AG04449 (cell line): ENCODE measurements at regions of chr15 and their contacts with region 1.

Region 1: GRCh38 chr15:67863442-67863987 is 23.7 kb upstream of the RNU6-1 start:
- DNase-seq: no peak
- H3K4me3 ChIP-seq: peak overlapping the region; percentile 51
- CTCF ChIP-seq: peak; percentile 92

Region 2: DNA sequence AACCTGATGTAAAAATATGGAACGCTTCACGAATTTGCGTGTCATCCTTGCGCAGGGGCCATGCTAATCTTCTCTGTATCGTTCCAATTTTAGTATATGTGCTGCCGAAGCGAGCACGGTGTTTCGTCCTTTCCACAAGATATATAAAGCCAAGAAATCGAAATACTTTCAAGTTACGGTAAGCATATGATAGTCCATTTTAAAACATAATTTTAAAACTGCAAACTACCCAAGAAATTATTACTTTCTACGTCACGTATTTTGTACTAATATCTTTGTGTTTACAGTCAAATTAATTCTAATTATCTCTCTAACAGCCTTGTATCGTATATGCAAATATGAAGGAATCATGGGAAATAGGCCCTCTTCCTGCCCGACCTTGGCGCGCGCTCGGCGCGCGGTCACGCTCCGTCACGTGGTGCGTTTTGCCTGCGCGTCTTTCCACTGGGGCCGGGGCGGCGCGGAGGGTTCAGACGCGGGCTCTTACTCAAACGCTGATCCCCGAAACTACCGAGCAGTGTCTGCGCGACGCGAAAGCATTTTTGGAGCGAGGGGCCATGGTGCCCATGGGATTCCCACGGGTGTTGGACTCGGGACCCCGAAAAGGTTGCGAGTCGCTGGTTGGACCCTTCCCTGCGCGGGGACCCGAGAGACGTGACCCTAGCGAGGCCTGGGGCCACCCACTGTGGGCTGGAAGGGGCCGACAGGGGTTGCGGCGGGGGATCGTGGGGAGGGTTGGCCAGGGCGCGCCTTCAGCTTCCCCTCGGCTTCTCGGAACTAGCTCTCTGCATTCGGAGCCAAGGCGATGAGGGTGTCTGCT is 23.4 kb before region 1 on chr15 and contains the start of gene RNU6-1:
- CTCF ChIA-PET with region 1: interaction called, 15 read pairs
- POLR2A ChIA-PET with region 1: no interaction called
- DNase-seq: peak; percentile 52
- H3K4me3 ChIP-seq: peak within 1 kb of the TSS; percentile 96
- CTCF ChIP-seq: no peak

Region 3: DNA sequence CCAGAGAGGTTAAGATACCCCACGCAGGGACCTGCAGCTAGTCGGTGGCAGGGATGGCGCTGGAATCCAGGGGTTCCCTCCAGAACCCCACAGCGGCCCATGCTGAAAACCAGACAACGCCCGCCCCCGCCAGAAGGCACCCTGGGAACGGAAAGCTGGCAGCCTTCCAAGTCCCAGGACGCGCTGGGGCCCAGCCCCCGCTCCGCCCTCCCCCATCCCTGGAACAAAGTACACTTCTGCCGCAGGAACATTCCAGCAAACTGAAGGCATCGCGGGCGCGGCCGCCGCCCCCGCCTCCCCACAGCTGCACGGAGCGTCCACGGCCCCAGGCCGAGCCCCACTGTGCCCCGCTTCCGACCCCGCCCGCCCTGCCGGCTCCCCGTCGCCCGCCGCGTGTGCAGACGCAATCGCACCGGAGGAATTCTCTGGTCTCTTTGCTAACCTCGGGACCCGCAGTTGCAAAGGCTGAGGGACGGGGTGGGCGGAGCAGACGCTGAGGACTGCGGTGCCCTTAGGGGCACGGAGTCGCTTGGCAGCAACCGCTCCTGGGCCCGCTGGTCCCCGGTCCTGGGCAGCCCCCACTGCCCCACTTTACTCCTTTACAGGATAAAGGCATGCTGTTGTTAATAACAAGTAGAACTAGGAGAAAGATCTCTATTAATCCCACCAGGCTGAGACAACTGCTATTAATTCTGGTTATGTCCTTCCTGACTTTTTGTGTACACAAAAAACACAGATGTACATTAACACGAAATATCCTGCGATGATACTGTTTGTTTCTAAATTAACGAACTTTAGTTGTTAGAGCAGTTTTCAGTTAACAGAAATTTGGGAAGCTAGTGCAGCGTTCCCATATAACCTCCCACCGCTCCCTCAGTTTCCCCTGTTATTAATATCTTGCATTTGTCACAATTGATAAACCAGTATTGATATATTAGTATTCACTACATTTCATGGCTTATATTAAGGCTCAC is 21.3 kb after region 1 on chr15:
- CTCF ChIA-PET with region 1: interaction called, 13 read pairs
- POLR2A ChIA-PET with region 1: no interaction called
- DNase-seq: no peak
- H3K4me3 ChIP-seq: peak overlapping the region; percentile 57
- CTCF ChIP-seq: no peak

Region 4: GRCh38 chr15:68154923-68155559 is 291.5 kb after region 1 on chr15:
- CTCF ChIA-PET with region 1: interaction called, 212 read pairs
- POLR2A ChIA-PET with region 1: no interaction called
- DNase-seq: no peak
- H3K4me3 ChIP-seq: no peak overlapping the region
- CTCF ChIP-seq: peak; percentile 65

Region 5: DNA sequence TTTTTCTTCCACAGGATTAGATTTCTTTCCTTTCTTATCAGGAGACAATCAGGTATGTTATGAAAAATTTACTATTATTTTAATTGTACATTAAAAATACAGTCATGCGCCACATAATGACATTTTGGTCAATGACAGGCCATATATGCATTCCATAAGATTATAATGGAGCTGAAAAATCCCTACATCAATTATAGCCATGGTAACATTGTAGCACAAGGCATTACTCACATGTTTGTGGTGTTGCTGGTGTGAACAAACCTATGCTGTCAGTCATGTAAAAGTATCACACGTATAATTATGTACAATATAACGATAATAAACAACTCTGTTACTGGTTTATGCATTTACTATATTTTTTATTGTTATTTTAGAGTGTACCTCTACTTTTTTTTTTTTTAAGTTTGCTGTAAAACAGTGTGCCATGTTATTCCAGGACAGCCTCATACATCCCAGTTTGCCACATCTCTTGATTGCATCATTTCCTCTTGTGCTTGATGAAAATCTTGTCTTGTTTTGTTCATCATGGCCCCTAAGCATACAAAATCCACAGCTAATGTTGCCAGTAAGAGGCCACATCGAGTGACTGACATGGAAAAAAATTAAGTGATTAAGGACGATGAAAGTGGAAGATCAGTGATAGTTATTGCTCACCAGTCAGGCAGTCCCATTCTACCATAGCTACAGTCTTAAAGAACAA is 320.3 kb after region 1 on chr15:
- CTCF ChIA-PET with region 1: interaction called, 10 read pairs
- POLR2A ChIA-PET with region 1: no interaction called
- DNase-seq: peak; percentile 5
- H3K4me3 ChIP-seq: no peak overlapping the region
- CTCF ChIP-seq: no peak

Region 6: GRCh38 chr15:68210821-68211655 is 347.5 kb after region 1 on chr15:
- CTCF ChIA-PET with region 1: interaction called, 21 read pairs
- POLR2A ChIA-PET with region 1: no interaction called
- DNase-seq: no peak
- H3K4me3 ChIP-seq: no peak overlapping the region
- CTCF ChIP-seq: peak; percentile 96

Region 7: GRCh38 chr15:68479406-68479805 is 615.9 kb after region 1 on chr15:
- CTCF ChIA-PET with region 1: no interaction called
- POLR2A ChIA-PET with region 1: no interaction called
- DNase-seq: peak; percentile 97
- H3K4me3 ChIP-seq: no peak overlapping the region
- CTCF ChIP-seq: no peak